ENCODE measurements at regions of chr16 and their contacts with region 1.

Region 1: DNA sequence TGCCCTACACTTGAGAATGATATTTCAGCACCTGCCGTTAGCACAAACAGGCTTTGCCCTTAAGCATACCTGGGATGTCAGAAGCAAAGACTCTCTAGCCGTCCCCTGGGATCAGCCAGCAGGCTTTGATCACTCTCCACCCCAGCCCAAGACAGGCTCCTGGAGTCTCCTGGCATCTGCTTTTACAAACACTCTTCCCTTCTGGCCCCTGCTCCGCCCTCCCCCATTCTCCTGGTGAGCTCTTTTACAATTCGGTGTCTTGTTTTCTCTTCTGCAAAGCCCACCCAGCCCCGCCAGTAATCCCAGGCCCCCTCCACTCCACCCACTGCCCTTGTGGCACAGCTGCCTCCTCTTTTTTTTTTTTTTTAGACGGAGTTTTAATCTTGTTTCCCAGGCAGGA is 50.4 kb downstream of the KATNIP start:
- DNase-seq: no peak
- H3K4me3 ChIP-seq: no peak overlapping the region
- H3K27ac ChIP-seq: no peak overlapping the region
- H3K27me3 ChIP-seq: no peaks in the 10 kb centered on the region
- CTCF ChIP-seq: no peak

Region 2: GRCh38 chr16:28069971-28070794 is 469.8 kb after region 1 on chr16:
- intact Hi-C with region 1: loop called in 1 of 2 experiments (anchors 5 kb)
- DNase-seq: peak in 2 of 10 donors; percentile 29 to 33
- H3K4me3 ChIP-seq: no peak overlapping the region
- H3K27ac ChIP-seq: peak overlapping the region in 2 of 59 donors; percentile 28 to 31
- H3K27me3 ChIP-seq: no peaks in the 10 kb centered on the region
- CTCF ChIP-seq: no peak

Measured in dorsolateral prefrontal cortex (tissue), 120 donors.